ENCODE measurements at regions of chr4 and their contacts with region 1.

Region 1: DNA sequence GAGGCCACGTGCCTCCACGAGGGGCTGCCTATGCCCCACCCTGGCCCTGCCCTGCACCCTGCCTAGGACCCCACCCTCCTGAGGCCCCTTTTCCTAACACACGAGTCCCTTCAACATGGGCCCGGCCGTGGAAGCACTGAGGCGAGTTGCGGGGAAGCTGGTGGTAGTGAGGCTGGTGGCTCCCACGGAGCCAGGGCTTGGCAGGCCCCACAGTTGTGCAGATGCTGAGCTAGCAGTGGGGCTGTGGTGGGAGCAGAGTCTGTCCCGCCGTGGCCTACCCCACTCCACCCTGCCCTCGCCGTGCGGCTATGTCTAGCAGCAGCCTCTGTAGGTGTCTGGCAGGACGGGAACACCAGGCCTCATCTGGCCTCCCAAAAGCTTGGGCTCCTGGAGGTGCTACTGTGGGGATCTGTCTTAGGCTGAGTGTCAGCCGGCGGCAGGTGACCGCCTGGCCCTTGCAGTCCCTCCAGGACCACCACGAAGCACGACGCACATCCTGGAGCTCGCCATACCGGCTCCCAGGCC is 18.8 kb downstream of the TACC3 start:
- DNase-seq: no peak
- H3K4me3 ChIP-seq: no peak overlapping the region
- H3K4me1 ChIP-seq: no peaks in the 10 kb centered on the region
- H3K27me3 ChIP-seq: no peaks in the 10 kb centered on the region

Region 2: DNA sequence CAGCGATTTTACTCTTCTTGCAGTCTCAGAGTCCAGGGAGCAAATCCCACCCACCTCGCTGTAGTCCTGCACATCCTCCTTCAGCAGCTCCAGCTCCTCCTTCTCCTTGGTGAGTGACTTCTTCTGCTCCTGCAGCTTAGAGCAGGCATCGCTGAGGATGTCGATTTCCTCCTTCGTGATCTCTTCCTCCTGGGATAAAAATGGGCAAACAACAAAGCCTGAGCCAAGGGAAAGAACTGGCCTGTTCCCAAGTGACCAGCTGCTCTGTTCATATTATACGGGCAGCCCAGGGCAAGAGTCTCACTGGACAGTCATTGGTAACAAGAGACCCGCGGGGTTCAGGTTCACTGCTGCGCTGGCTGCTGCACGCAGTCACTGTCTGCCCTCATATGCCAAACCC is 79.2 kb after region 1 on chr4:
- in situ Hi-C with region 1: loop called (anchors 5 kb)
- DNase-seq: no peak
- H3K4me3 ChIP-seq: no peak overlapping the region
- H3K4me1 ChIP-seq: no peaks in the 10 kb centered on the region
- H3K27me3 ChIP-seq: no peaks in the 10 kb centered on the region